Right lobe of liver (tissue), 6 donors: ENCODE measurements at regions of chr10 and their contacts with region 1.

Region 1: DNA sequence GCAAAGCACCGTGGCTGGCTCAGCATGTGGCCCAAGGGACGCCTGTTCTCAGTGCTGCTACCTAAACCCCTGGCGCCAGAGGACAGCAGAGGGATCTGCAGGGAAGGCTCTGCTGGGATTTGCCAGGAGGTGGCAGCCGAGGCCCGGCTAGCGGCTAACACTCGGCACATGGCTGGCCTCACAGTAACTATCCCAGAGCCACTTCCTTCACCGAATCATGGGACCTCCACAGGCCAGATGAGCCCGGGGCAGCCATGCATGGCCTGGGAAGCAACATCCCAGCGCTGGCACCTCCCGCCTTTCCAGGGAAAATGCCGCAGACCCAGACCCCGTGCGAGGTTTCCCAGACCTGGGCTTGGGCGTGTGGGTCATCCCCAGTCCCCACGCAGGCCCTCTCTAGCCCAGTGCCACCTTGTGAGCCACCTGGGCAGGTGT is 36.4 kb downstream of the DPYSL4 start:
- DNase-seq: peak; percentile 80 to 84 (median 83)
- ATAC-seq: peak; percentile 93 to 99 (median 97)
- H3K4me3 ChIP-seq: no peak overlapping the region
- H3K27ac ChIP-seq: no peak overlapping the region
- H3K4me1 ChIP-seq: no peaks in the 10 kb centered on the region
- H3K27me3 ChIP-seq: no peaks in the 10 kb centered on the region
- CTCF ChIP-seq: peak; percentile 93 to 97 (median 94)
- POLR2A ChIP-seq: no peak

Region 2: DNA sequence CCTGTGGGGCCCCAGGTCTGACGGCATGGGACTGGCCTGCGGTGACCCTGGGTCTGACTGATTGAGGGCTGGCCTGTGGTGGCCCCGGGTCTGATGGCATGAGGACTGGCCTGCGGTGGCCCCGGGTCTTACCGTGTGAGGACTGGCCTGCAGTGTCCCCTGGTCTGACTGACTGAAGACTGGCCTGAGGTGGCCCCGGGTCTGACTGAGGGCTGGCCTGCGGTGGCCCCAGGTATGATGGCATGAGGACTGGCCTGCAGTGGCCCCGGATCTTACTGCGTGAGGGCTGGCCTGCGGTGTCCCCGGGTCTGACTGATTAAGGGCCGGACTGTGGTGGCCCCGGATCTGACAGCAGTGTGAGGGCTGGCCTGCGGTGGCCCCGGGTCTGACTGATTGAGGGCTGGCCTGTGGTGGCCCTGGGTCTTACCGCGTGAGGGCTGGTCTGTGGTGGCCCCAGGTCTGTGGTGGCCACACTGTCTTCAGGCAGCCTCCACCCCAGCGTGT is 146.5 kb before region 1 on chr10:
- intact Hi-C with region 1: no loop called
- DNase-seq: peak in 1 of 3 donors; percentile 33
- ATAC-seq: peak in 1 of 4 donors; percentile 52
- H3K4me3 ChIP-seq: no peak overlapping the region
- H3K27ac ChIP-seq: no peak overlapping the region
- H3K4me1 ChIP-seq: no peaks in the 10 kb centered on the region
- H3K27me3 ChIP-seq: no peaks in the 10 kb centered on the region
- CTCF ChIP-seq: no peak
- POLR2A ChIP-seq: no peak

Region 3: DNA sequence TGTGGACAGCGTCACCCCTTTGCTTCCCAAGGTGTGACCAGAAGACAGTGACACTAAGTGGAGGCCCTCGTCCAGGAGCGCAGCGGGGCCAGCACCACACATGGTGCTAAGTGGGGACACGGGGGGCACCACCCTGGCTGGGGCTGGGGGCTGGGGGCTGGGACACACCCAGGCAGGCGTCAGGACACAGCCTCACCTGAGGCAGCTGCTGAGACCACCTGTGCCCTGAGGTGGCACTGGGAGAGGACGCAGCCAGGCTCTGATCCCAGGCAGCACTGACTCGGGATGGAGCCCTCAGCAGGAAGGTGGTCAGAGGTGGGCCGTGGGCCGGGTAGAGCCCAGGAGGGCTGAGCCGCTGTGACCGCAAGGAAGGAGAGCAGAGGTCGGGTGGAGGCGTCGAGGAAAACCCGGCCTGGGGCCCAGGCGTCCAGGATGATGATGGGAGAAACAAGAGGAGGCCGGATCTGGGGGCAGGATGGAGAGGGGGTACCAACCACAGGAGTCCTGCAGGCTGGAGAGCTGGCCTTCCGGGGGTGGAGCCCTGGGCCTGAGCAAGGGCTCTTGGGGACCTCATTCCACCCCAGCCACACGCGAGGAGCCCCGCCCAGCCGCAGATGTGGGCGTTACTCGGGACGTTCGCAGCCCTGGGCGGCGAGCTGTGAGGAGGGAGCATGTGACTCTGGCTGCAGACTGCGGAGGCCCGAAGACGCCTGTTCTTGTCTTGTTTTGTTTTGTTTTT is 131.4 kb after region 1 on chr10:
- intact Hi-C with region 1: loop called (anchors 5 kb)
- DNase-seq: peak in 1 of 3 donors; percentile 39
- ATAC-seq: no peak
- H3K4me3 ChIP-seq: no peak overlapping the region
- H3K27ac ChIP-seq: no peak overlapping the region
- H3K4me1 ChIP-seq: no peaks in the 10 kb centered on the region
- H3K27me3 ChIP-seq: no peaks in the 10 kb centered on the region
- CTCF ChIP-seq: no peak
- POLR2A ChIP-seq: no peak

Region 4: DNA sequence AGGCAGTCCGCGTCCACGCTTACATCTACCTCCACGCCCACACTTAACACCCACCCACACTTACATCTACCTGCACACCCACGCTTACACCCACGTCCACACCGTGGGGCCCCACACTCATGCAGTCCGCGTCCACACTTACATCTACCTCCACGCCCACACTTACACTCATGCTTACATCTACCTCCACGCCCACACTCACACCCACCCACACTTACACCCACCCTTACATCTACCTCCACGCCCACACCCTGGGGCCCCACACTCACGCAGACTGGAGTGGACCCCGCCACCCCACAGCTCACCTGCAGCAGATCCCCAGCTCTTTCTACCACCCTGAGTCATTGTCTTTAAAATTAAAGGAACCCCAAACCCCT is 141.4 kb after region 1 on chr10:
- intact Hi-C with region 1: no loop called
- DNase-seq: peak in 1 of 3 donors; percentile 51
- ATAC-seq: peak in 1 of 4 donors; percentile 78
- H3K4me3 ChIP-seq: no peak overlapping the region
- H3K27ac ChIP-seq: no peak overlapping the region
- H3K4me1 ChIP-seq: no peaks in the 10 kb centered on the region
- H3K27me3 ChIP-seq: no peaks in the 10 kb centered on the region
- CTCF ChIP-seq: no peak
- POLR2A ChIP-seq: no peak

Region 5: DNA sequence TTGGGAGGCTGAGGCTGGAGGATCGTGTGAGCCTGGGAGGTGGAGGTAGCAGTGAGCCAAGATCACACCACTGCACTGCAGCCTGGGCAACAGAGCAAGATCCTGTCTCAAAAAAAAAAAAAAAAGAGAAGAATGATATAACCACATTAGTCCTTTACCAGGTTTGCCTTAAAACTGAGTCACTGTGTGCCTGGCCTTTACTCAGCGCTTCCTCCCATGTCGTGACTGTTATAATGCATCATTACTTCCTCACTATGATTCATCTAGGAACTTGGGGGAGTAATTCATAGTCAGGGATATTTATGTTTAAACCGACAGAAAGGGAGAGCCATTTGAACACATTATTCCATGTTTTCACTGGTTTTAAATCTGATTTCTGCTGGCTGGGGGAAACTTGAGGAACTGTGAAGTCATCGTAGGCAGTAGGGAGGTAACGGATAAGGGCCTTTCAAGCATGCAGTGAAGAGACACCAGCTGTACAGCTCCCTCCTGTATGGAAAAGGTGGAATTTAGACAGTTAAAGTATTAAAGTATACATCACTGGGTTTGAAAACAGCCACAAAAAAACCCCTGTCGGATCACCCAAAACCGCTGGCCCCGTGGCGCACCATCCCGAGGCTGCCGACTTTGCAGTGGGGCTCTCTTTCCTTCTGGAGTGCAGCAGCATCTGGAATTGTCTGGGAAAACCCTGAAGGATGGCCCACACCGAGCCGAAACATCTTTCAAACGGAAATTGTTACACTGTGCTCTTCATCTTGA is 443.0 kb after region 1 on chr10:
- intact Hi-C with region 1: no loop called
- DNase-seq: no peak
- ATAC-seq: peak in 1 of 4 donors; percentile 37
- H3K4me3 ChIP-seq: no peak overlapping the region
- H3K27ac ChIP-seq: no peak overlapping the region
- H3K4me1 ChIP-seq: no peaks in the 10 kb centered on the region
- H3K27me3 ChIP-seq: no peaks in the 10 kb centered on the region
- CTCF ChIP-seq: no peak
- POLR2A ChIP-seq: no peak